ENCODE measurements at regions of chr1 and their contacts with region 1.

Region 1: GRCh38 chr1:220733090-220733601 is 15.0 kb upstream of the MTARC2 start:
- DNase-seq: peak; percentile 54
- H3K4me3 ChIP-seq: peak overlapping the region; percentile 10; the same call in 1 of the 2 replicates
- H3K27ac ChIP-seq: no peak overlapping the region
- H3K27me3 ChIP-seq: no peaks in the 10 kb centered on the region
- CTCF ChIP-seq: peak; percentile 74

Region 2: DNA sequence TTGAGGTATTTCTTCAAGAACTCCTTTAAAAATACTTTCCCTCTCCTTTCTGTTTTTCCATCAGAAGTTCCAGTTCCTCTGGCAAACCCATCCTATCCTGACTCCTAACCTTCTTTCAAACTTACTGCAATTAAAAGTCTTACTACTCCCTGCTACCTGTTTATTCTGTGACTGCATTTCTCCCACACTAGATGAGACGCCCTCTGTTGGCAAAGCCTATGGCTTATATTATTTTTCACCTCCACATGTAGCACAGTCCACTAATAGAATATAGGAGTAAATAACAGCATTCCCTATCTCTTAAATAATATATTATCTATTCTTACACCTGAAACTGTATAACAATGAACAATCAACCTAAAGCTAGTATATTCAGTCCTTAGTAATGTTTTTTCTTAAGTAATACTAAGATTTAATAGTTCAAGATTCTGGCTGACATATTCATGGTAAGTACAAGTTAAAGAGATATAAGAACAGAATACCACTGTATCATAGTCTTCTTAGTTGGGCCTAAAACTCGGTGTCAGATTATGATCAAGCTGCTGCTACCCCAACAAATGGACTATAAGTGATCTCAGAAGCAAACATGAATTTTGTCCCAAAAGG is 515.7 kb before region 1 on chr1:
- CTCF ChIA-PET with region 1: interaction called, 11 read pairs
- POLR2A ChIA-PET with region 1: no interaction called
- DNase-seq: no peak
- H3K4me3 ChIP-seq: no peak overlapping the region
- H3K27ac ChIP-seq: no peak overlapping the region
- H3K27me3 ChIP-seq: no peaks in the 10 kb centered on the region
- CTCF ChIP-seq: peak; percentile 27; the same call in 1 of the 2 replicates

Region 3: GRCh38 chr1:220300442-220301121 is 432.6 kb before region 1 on chr1:
- CTCF ChIA-PET with region 1: interaction called, 14 read pairs
- POLR2A ChIA-PET with region 1: interaction called, 3 read pairs
- DNase-seq: peak; percentile 79
- H3K4me3 ChIP-seq: peak overlapping the region; percentile 27
- H3K27ac ChIP-seq: peak overlapping the region; percentile 81
- H3K27me3 ChIP-seq: no peaks in the 10 kb centered on the region
- CTCF ChIP-seq: no peak

Region 4: GRCh38 chr1:220690140-220691025 is 42.8 kb before region 1 on chr1 and contains the start of gene C1orf115:
- CTCF ChIA-PET with region 1: interaction called, 22 read pairs
- POLR2A ChIA-PET with region 1: no interaction called
- DNase-seq: no peak
- H3K4me3 ChIP-seq: peak within 1 kb of the TSS; percentile 50
- H3K27ac ChIP-seq: no peak within 1 kb of the TSS
- H3K27me3 ChIP-seq: peaks cover 27% of the 10 kb centered on the region
- CTCF ChIP-seq: peak; percentile 70
- polyA plus RNA-seq, gene C1orf115: 0.05 and 0.06 TPM in 2 replicates

Region 5: GRCh38 chr1:220755309-220755708 is 22.2 kb after region 1 on chr1:
- CTCF ChIA-PET with region 1: interaction called, 23 read pairs
- POLR2A ChIA-PET with region 1: no interaction called
- DNase-seq: no peak
- H3K4me3 ChIP-seq: no peak overlapping the region
- H3K27ac ChIP-seq: no peak overlapping the region
- H3K27me3 ChIP-seq: no peaks in the 10 kb centered on the region
- CTCF ChIP-seq: no peak

Region 6: DNA sequence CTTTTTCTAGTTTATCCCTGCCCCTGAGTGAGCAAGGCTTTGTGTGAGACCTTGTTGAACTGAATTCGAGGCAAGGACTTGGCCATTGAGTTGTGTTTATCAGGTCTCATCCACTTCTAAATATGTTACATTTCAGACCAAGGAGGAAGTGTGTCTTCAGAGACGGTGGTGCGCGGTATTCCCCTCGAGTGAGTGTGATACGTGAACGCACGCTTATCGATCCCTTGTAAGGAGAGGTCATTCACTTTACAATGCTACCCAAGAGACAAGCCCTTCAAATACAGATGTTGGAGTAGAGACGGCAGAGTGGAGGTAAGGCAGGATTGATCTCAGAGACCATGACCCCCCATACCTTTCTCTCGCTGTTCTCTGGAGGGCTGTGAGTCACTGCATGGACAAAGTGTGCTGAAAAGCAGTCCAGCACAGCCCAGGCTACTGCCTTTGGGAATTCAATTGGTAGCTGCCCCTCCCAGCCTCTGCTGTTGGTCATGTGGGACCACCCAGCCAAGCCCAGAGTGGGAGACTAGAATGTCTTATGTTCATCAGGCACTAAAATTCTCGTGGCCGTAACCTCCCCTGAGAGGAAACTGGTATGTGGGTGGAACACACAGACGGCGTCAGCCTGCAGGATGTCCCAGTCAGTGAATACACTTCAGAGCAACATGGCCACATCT is 37.2 kb after region 1 on chr1:
- CTCF ChIA-PET with region 1: interaction called, 14 read pairs
- POLR2A ChIA-PET with region 1: interaction called, 4 read pairs
- DNase-seq: no peak
- H3K4me3 ChIP-seq: no peak overlapping the region
- H3K27ac ChIP-seq: no peak overlapping the region
- H3K27me3 ChIP-seq: no peaks in the 10 kb centered on the region
- CTCF ChIP-seq: no peak

Region 7: GRCh38 chr1:220803401-220804201 is 70.5 kb after region 1 on chr1:
- CTCF ChIA-PET with region 1: interaction called, 11 read pairs
- POLR2A ChIA-PET with region 1: no interaction called
- DNase-seq: no peak
- H3K4me3 ChIP-seq: no peak overlapping the region
- H3K27ac ChIP-seq: peak overlapping the region; percentile 39
- H3K27me3 ChIP-seq: peaks cover 6% of the 10 kb centered on the region
- CTCF ChIP-seq: peak; percentile 61

Region 8: DNA sequence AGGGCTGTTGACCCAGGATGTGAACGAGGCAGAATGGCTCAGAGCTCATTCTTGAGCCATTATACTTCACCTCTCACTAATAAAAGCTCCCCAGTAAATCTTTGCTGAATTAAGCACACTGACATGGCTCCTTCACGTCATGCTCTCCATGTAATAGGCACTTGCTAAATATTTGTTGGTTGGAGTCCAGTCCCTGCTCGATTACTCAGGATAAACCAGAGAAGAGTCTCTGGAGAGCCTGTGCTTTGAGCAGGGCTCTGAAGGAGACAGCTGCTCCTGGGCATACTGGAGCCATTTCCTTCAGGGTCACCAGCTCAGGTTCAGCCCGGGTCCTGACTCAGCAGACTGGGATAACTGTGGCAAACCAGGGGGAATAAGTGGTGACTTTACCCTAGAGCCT is 193.0 kb after region 1 on chr1:
- CTCF ChIA-PET with region 1: no interaction called
- POLR2A ChIA-PET with region 1: no interaction called
- DNase-seq: no peak
- H3K4me3 ChIP-seq: no peak overlapping the region
- H3K27ac ChIP-seq: no peak overlapping the region
- H3K27me3 ChIP-seq: no peaks in the 10 kb centered on the region
- CTCF ChIP-seq: no peak

Measured in AG04450 (cell line).